ENCODE measurements at regions of chr19 and their contacts with region 1.

Region 1: GRCh38 chr19:47095476-47096099 is 18.0 kb downstream of the ZC3H4 start:
- DNase-seq: no peak

Region 2: GRCh38 chr19:47112997-47113849 is 17.6 kb after region 1 on chr19 and contains the start of gene ZC3H4:
- intact Hi-C with region 1: loop called (anchors 2 kb)
- DNase-seq: peak; percentile 100
- total RNA-seq, gene ZC3H4: 28.1 TPM